Naive thymus-derived CD4-positive, alpha-beta T cell (primary cell): ENCODE measurements at regions of chr10 and their contacts with region 1.

Region 1: DNA sequence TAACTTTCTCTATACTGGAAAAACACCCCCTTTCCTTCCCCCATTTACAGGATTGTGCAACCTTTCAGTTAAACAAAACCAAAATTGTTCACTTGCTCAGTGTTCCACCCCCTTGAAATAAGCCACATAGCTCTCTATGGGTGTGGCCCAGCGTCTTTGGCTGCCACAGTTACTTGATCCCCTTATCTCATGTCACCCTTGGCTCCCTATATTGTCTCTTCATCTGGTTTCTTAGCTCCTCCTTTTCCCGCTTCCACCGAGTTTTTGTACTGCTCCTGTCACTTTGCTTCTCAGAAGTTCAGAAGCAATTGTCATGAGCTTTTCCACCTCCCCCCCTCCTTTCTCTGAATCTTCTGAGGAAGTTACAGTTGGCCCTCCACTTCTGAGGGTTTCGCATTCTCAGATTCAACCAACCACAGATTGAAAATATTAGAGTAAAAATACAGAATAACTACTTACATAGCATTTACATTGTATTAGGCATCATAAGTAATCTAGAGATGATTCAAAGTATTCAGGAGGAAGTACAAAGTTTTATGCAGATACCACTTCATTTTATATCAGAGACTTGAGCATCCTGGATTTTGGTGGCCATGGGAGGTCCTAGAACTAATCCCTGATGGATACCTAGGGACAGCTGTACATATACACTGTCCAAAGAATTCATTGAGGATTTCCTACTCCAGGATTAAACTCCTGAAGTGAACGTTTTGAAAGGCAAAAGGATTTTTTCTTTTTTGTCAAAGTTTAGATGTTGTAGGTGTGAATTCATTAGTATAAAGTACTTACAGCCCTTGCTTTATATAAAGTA is 60.4 kb downstream of the ADD3 start:
- DNase-seq: peak in 7 of 9 donors; percentile 40 to 69 (median 52)
- ATAC-seq: peak; percentile 92
- H3K4me3 ChIP-seq: peak overlapping the region; percentile 18
- H3K4me3 Mint-ChIP-seq: peak overlapping the region; percentile 39 to 91 (median 78)
- H3K27ac ChIP-seq: peak overlapping the region; percentile 57
- H3K27ac Mint-ChIP-seq: peak overlapping the region; percentile 83 to 96 (median 92)
- H3K4me1 ChIP-seq: peaks cover 76 to 84% of the 10 kb centered on the region in 2 donors
- H3K4me1 Mint-ChIP-seq: peaks cover 65 to 100% (median 95%) of the 10 kb centered on the region in 7 donors
- H3K27me3 ChIP-seq: no peaks in the 10 kb centered on the region
- H3K27me3 Mint-ChIP-seq: no peaks in the 10 kb centered on the region

Region 2: GRCh38 chr10:109114579-109114978 is 953.6 kb before region 1 on chr10:
- CTCF ChIA-PET with region 1: no interaction called
- POLR2A ChIA-PET with region 1: no interaction called
- intact Hi-C with region 1: no loop called
- DNase-seq: no peak
- ATAC-seq: no peak
- H3K4me3 ChIP-seq: no peak overlapping the region
- H3K4me3 Mint-ChIP-seq: no peak overlapping the region
- H3K27ac ChIP-seq: no peak overlapping the region
- H3K27ac Mint-ChIP-seq: no peak overlapping the region
- H3K4me1 ChIP-seq: no peaks in the 10 kb centered on the region
- H3K4me1 Mint-ChIP-seq: no peaks in the 10 kb centered on the region
- H3K27me3 ChIP-seq: no peaks in the 10 kb centered on the region
- H3K27me3 Mint-ChIP-seq: no peaks in the 10 kb centered on the region

Region 3: GRCh38 chr10:109587366-109587765 is 480.8 kb before region 1 on chr10:
- CTCF ChIA-PET with region 1: no interaction called
- POLR2A ChIA-PET with region 1: no interaction called
- intact Hi-C with region 1: no loop called
- DNase-seq: no peak
- ATAC-seq: no peak
- H3K4me3 ChIP-seq: no peak overlapping the region
- H3K4me3 Mint-ChIP-seq: no peak overlapping the region
- H3K27ac ChIP-seq: no peak overlapping the region
- H3K27ac Mint-ChIP-seq: no peak overlapping the region
- H3K4me1 ChIP-seq: no peaks in the 10 kb centered on the region
- H3K4me1 Mint-ChIP-seq: no peaks in the 10 kb centered on the region
- H3K27me3 ChIP-seq: no peaks in the 10 kb centered on the region
- H3K27me3 Mint-ChIP-seq: peaks cover 0 to 4% (median 0%) of the 10 kb centered on the region in 5 donors

Region 4: DNA sequence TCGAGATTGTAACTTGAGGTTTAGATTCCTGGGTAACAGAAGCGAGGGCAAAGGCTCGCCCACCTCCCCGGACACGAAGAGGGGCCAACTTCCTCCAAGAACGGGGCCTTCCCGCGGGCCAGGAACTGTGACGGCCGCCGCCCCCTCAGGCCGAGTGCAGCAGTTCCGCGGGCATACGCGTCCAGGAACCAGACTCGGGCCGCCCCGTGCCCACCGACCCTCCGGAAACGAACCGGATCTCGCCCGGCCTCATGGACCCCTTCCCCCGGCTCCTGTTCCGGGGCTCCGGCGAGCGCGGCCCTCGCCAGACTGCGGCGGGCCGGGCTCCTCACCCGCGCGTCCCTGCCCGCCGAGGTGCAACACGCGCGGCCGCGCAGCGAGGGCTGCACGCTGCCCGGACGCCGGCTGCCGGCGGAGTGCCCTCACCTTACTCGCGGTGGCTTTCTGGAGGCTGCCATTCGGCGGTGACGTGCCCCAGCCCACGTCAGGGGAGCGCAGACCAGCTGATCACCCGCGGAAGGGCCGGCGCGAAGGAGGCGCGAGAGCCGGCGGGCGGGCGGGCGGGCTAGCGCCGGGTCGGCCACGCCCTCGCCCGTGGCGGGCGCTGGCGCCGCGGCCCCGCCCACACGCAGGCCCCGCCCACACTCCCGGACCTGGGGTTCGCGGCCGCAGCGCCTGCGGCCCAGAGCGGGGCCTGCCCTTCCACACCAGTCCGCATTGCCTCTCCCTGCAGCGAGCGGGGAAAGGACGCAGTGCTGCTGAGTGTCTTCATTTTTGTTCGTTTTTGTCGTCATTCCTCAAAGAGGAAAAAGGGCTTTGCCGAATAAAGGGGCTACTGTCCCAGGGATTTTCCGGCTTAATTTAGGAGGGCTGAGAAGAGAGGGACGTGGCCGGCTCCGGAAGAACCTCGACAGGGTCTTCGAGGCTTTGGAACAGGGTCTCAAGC is 144.9 kb before region 1 on chr10 and contains the start of gene XPNPEP1:
- CTCF ChIA-PET with region 1: no interaction called
- POLR2A ChIA-PET with region 1: no interaction called
- intact Hi-C with region 1: loop called in 1 of 2 experiments (anchors 5 kb)
- DNase-seq: peak; percentile 55 to 90 (median 66)
- ATAC-seq: peak; percentile 98
- H3K4me3 ChIP-seq: peak within 1 kb of the TSS; percentile 67
- H3K4me3 Mint-ChIP-seq: peak within 1 kb of the TSS; percentile 78 to 94 (median 90)
- H3K27ac ChIP-seq: peak within 1 kb of the TSS; percentile 83
- H3K27ac Mint-ChIP-seq: peak within 1 kb of the TSS; percentile 75 to 95 (median 89)
- H3K4me1 ChIP-seq: peaks cover 30 to 39% of the 10 kb centered on the region in 2 donors
- H3K4me1 Mint-ChIP-seq: peaks cover 36 to 58% (median 54%) of the 10 kb centered on the region in 7 donors
- H3K27me3 ChIP-seq: no peaks in the 10 kb centered on the region
- H3K27me3 Mint-ChIP-seq: peaks cover 0 to 16% (median 0%) of the 10 kb centered on the region in 5 donors
- total RNA-seq, gene XPNPEP1: 44.1 to 100 (median 60.7) TPM

Region 5: DNA sequence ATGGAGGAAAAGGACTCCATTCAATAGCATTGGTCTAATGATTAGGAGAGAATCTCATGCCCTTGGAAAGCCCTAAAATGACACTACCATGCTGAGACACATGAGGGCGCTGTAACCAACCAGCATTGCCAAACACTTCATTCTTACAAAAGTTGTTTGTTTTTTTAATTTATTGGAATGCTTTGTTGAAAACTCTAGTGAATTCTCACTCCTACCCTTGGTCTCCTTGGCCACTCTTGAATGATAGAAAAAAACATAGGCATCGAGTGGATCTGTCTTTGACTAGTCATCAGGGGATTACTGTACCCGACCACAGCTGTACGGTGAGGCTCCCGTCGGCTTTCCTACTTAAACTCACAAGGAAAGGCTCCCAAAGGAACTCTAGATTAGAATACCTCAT is 89.7 kb before region 1 on chr10:
- CTCF ChIA-PET with region 1: no interaction called
- POLR2A ChIA-PET with region 1: no interaction called
- intact Hi-C with region 1: no loop called
- DNase-seq: peak; percentile 30 to 68 (median 51)
- ATAC-seq: peak; percentile 87
- H3K4me3 ChIP-seq: no peak overlapping the region
- H3K4me3 Mint-ChIP-seq: no peak overlapping the region
- H3K27ac ChIP-seq: no peak overlapping the region
- H3K27ac Mint-ChIP-seq: peak overlapping the region in 3 of 9 donors; percentile 25 to 44 (median 41)
- H3K4me1 ChIP-seq: no peaks in the 10 kb centered on the region
- H3K4me1 Mint-ChIP-seq: peaks cover 5 to 38% (median 19%) of the 10 kb centered on the region in 7 donors
- H3K27me3 ChIP-seq: no peaks in the 10 kb centered on the region
- H3K27me3 Mint-ChIP-seq: peaks cover 0 to 12% (median 0%) of the 10 kb centered on the region in 5 donors

Region 6: GRCh38 chr10:110052916-110053315 is 15.2 kb before region 1 on chr10:
- CTCF ChIA-PET with region 1: interaction called, 5 read pairs
- POLR2A ChIA-PET with region 1: interaction called, 9 read pairs
- intact Hi-C with region 1: loop called (anchors 1 to 2 kb)
- DNase-seq: no peak
- ATAC-seq: no peak
- H3K4me3 ChIP-seq: no peak overlapping the region
- H3K4me3 Mint-ChIP-seq: peak overlapping the region in 3 of 10 donors; percentile 1 to 61 (median 37)
- H3K27ac ChIP-seq: no peak overlapping the region
- H3K27ac Mint-ChIP-seq: peak overlapping the region; percentile 56 to 93 (median 83)
- H3K4me1 ChIP-seq: peaks cover 13 to 38% of the 10 kb centered on the region in 2 donors
- H3K4me1 Mint-ChIP-seq: peaks cover 42 to 89% (median 83%) of the 10 kb centered on the region in 7 donors
- H3K27me3 ChIP-seq: no peaks in the 10 kb centered on the region
- H3K27me3 Mint-ChIP-seq: no peaks in the 10 kb centered on the region

Region 7: GRCh38 chr10:110081911-110082310 is 13.7 kb after region 1 on chr10:
- CTCF ChIA-PET with region 1: interaction called, 9 read pairs
- POLR2A ChIA-PET with region 1: interaction called, 13 read pairs
- intact Hi-C with region 1: loop called (anchors 1 kb)
- DNase-seq: peak in 1 of 9 donors; percentile 32
- ATAC-seq: peak; percentile 53
- H3K4me3 ChIP-seq: no peak overlapping the region
- H3K4me3 Mint-ChIP-seq: peak overlapping the region; percentile 38 to 92 (median 64)
- H3K27ac ChIP-seq: peak overlapping the region; percentile 47
- H3K27ac Mint-ChIP-seq: peak overlapping the region; percentile 51 to 94 (median 94)
- H3K4me1 ChIP-seq: peaks cover 68 to 82% of the 10 kb centered on the region in 2 donors
- H3K4me1 Mint-ChIP-seq: peaks cover 64 to 99% (median 88%) of the 10 kb centered on the region in 7 donors
- H3K27me3 ChIP-seq: no peaks in the 10 kb centered on the region
- H3K27me3 Mint-ChIP-seq: no peaks in the 10 kb centered on the region